RWPE1 (cell line): ENCODE measurements at regions of chr12 and their contacts with region 1.

Region 1: GRCh38 chr12:42023733-42024494 is 120.8 kb downstream of the GXYLT1 start:
- DNase-seq: peak; percentile 66
- H3K27ac ChIP-seq: no peak overlapping the region
- CTCF ChIP-seq: peak; percentile 91

Region 2: DNA sequence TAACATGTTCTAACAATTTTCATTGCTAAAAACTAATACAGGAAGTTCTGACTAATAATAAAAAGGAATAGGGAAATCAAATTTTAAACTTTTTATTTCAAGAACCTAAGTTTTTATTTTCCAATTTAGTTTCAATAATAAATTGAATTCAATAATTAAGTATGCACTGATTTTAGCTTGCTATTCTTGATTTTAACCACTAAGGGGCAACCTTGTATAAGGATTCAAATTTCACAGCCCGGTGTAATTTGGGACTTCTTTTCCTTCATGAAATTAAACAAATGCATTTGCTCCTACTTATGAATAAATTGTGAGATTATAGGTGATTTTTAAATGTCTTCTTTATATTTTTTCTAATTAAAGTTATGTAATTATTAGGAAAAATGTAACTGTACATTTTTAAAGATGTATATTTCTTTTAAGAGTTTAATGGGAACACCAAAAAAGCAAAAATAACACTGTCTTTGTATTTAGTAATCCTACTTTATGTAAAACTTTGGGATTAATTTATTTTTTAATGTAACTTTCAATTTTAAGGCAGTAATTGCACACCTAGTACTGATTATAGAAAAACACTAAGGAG is 1077.2 kb before region 1 on chr12:
- CTCF ChIA-PET with region 1: interaction called, 10 read pairs
- POLR2A ChIA-PET with region 1: no interaction called
- DNase-seq: peak; percentile 24
- H3K27ac ChIP-seq: no peak overlapping the region
- CTCF ChIP-seq: peak; percentile 67

Region 3: DNA sequence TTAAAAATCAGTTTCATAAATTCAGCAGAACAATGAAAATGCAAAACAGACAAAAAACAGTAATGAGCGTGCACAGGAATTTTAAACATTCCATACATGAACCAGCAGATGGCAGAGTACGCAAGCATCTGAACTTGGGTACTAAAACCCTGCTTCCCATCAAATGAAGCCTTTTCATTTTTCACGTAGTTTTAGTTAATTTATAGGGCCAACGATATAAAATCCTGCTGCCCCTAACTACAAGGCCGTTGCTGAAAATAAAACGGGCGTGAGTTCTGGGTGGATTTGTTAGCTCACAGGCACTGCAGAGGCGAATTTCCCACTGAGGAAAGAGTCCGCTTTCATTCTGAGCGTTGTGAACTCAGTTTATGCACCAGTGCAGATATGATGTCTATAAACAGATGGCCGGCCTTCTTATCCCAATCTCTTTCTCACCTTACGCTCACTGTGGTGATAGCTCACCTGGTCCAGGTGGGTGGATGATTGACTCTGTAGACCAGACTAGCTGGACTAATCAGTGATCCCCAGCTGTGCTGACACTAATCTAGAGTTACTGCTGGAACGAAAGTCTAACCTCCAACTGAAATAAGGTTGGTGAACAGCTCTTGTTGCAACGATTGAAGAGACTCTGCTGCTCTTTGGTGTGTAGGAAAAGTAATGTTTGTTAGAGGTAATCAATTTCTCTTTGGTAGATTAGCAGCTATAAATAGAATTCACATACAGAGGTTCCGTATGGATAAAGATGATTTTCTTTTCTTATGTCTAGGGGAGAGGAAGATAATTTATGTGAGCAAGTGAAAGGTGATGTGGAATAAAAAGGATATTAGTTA is 746.6 kb before region 1 on chr12:
- CTCF ChIA-PET with region 1: interaction called, 11 read pairs
- POLR2A ChIA-PET with region 1: no interaction called
- DNase-seq: peak; percentile 41
- H3K27ac ChIP-seq: no peak overlapping the region
- CTCF ChIP-seq: peak; percentile 64

Region 4: GRCh38 chr12:42196723-42197603 is 173.0 kb after region 1 on chr12:
- CTCF ChIA-PET with region 1: no interaction called
- POLR2A ChIA-PET with region 1: no interaction called
- DNase-seq: no peak
- H3K27ac ChIP-seq: no peak overlapping the region
- CTCF ChIP-seq: no peak